ENCODE measurements at regions of chr14 and their contacts with region 1.

Region 1: DNA sequence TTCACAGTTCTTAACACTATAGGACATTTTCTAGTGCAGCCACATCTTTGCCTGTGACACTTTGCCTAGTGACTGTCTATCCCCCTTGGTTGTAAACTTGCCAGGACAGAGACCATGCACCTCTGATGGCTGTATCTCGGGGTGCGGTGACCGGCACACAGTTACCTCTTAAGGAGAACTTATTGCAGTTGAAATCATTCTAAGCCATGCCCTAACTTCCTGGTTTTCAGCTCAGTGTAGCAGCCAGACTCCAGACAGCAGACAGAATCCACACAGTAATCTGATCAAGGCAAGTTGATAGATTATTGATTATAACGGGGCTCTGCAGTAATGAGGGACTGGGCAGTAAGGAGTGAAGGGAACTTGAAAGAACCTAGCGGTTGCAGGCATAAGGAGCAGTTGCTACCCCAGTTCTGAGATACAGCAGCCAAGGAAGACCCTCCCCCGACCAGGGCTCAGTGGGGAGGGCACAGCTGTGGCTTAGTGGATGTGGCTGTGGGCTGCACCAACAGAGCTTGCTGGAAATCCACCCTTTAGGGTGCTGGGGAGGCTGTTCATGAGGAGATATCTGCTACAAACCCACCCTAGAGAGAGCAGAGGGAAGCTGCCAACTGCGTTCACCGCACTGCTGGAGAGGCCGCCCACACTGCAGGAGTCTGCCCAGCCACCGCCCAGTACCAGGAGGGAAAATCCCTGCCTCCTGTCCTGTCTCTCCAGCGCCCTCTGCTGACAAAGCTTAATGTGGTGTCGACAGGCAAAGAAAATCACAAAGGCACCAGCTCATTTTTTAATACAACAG is 58.2 kb upstream of the BEGAIN start:
- DNase-seq: peak; percentile 75 to 87 (median 76)
- H3K4me3 ChIP-seq: no peak overlapping the region
- H3K4me3 Mint-ChIP-seq: peak overlapping the region in 5 of 7 donors; percentile 13 to 56 (median 36)
- H3K27ac ChIP-seq: peak overlapping the region; percentile 2
- H3K27ac Mint-ChIP-seq: peak overlapping the region in 5 of 8 donors; percentile 4 to 48 (median 24)
- H3K4me1 ChIP-seq: peaks cover 33% of the 10 kb centered on the region
- H3K4me1 Mint-ChIP-seq: peaks cover 42 to 55% (median 55%) of the 10 kb centered on the region in 3 donors
- H3K27me3 ChIP-seq: no peaks in the 10 kb centered on the region
- H3K27me3 Mint-ChIP-seq: peaks cover 0 to 5% of the 10 kb centered on the region in 2 donors

Region 2: GRCh38 chr14:100383727-100384158 is 261.6 kb before region 1 on chr14:
- CTCF ChIA-PET with region 1: interaction called, 136 read pairs
- POLR2A ChIA-PET with region 1: interaction called, 5 read pairs
- DNase-seq: peak; percentile 51 to 78 (median 57)
- H3K4me3 ChIP-seq: no peak overlapping the region
- H3K4me3 Mint-ChIP-seq: no peak overlapping the region
- H3K27ac ChIP-seq: no peak overlapping the region
- H3K27ac Mint-ChIP-seq: no peak overlapping the region
- H3K4me1 ChIP-seq: peaks cover 12% of the 10 kb centered on the region
- H3K4me1 Mint-ChIP-seq: peaks cover 8 to 15% (median 11%) of the 10 kb centered on the region in 3 donors
- H3K27me3 ChIP-seq: no peaks in the 10 kb centered on the region
- H3K27me3 Mint-ChIP-seq: no peaks in the 10 kb centered on the region

Region 3: GRCh38 chr14:100440187-100440631 is 205.2 kb before region 1 on chr14:
- CTCF ChIA-PET with region 1: interaction called, 25 read pairs
- POLR2A ChIA-PET with region 1: no interaction called
- DNase-seq: peak in 2 of 5 donors; percentile 38 to 53
- H3K4me3 ChIP-seq: no peak overlapping the region
- H3K4me3 Mint-ChIP-seq: peak overlapping the region in 1 of 7 donors; percentile 77
- H3K27ac ChIP-seq: peak overlapping the region; percentile 35
- H3K27ac Mint-ChIP-seq: no peak overlapping the region
- H3K4me1 ChIP-seq: no peaks in the 10 kb centered on the region
- H3K4me1 Mint-ChIP-seq: peaks cover 4 to 15% (median 13%) of the 10 kb centered on the region in 3 donors
- H3K27me3 ChIP-seq: no peaks in the 10 kb centered on the region
- H3K27me3 Mint-ChIP-seq: peaks cover 0 to 2% of the 10 kb centered on the region in 2 donors

Region 4: DNA sequence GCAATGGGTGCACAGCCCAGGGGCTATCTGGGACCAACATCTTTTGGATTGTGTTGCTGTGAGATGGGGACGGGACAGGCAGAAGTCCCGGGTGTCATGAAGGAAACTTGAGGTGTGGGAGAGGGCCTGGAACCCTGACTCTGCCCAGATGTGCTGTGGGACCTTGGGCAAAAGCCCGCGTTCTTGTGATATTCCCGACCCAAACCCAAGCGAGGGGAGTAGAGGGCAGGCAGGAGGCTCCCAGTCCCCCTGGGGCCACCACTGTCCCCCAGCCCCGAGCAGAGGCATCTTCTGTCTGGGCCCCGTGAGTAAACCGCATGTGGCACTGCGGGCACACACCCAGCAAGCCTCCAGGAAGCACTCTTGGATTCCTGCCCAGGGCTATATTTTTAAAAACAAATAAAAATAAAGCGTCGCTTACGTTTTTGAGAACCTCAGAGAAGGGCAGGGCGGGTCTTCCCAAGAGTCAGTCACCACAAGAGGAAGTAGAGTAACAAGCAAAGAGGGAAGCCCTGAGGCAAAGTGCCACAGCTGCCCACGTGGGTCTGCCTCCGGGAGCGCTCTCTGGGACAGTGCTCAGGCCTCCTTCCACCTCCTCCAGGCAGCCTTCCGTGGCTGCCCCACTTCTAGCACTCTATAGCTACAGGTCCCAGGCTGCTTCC is 97.6 kb before region 1 on chr14:
- CTCF ChIA-PET with region 1: interaction called, 18 read pairs
- POLR2A ChIA-PET with region 1: interaction called, 6 read pairs
- DNase-seq: peak; percentile 23 to 81 (median 78)
- H3K4me3 ChIP-seq: peak overlapping the region; percentile 56
- H3K4me3 Mint-ChIP-seq: peak overlapping the region; percentile 45 to 90 (median 78)
- H3K27ac ChIP-seq: no peak overlapping the region
- H3K27ac Mint-ChIP-seq: peak overlapping the region; percentile 57 to 95 (median 84)
- H3K4me1 ChIP-seq: peaks cover 29% of the 10 kb centered on the region
- H3K4me1 Mint-ChIP-seq: peaks cover 21 to 42% (median 30%) of the 10 kb centered on the region in 3 donors
- H3K27me3 ChIP-seq: no peaks in the 10 kb centered on the region
- H3K27me3 Mint-ChIP-seq: peaks cover 0 to 5% of the 10 kb centered on the region in 2 donors

Region 5: GRCh38 chr14:100662879-100663760 is 17.7 kb after region 1 on chr14:
- CTCF ChIA-PET with region 1: interaction called, 46 read pairs
- POLR2A ChIA-PET with region 1: no interaction called
- DNase-seq: peak; percentile 35 to 64 (median 40)
- H3K4me3 ChIP-seq: no peak overlapping the region
- H3K4me3 Mint-ChIP-seq: no peak overlapping the region
- H3K27ac ChIP-seq: no peak overlapping the region
- H3K27ac Mint-ChIP-seq: no peak overlapping the region
- H3K4me1 ChIP-seq: no peaks in the 10 kb centered on the region
- H3K4me1 Mint-ChIP-seq: peaks cover 0 to 2% (median 0%) of the 10 kb centered on the region in 3 donors
- H3K27me3 ChIP-seq: no peaks in the 10 kb centered on the region
- H3K27me3 Mint-ChIP-seq: peaks cover 9 to 21% of the 10 kb centered on the region in 2 donors

Measured in CD8-positive, alpha-beta memory T cell (primary cell).